Transverse colon (tissue), 4 donors: ENCODE measurements at regions of chr2 and their contacts with region 1.

Region 1: GRCh38 chr2:102251042-102251848 is 60.1 kb upstream of the IL1RL1 start:
- DNase-seq: peak; percentile 73
- H3K4me3 ChIP-seq: peak overlapping the region; percentile 7 to 51 (median 30)
- H3K27ac ChIP-seq: peak overlapping the region in 1 of 4 donors; percentile 0
- H3K4me1 ChIP-seq: peaks cover 0 to 10% (median 5%) of the 10 kb centered on the region in 4 donors
- H3K27me3 ChIP-seq: peaks cover 5% of the 10 kb centered on the region
- CTCF ChIP-seq: peak; percentile 62 to 76 (median 72)
- EP300 ChIP-seq: no peak
- POLR2A ChIP-seq: no peak

Region 2: GRCh38 chr2:102063941-102064678 is 187.1 kb before region 1 on chr2:
- in situ Hi-C with region 1: no loop called
- intact Hi-C with region 1: no loop called
- DNase-seq: peak; percentile 81
- H3K4me3 ChIP-seq: no peak overlapping the region
- H3K27ac ChIP-seq: peak overlapping the region; percentile 88 to 93 (median 91)
- H3K4me1 ChIP-seq: peaks cover 21 to 64% (median 38%) of the 10 kb centered on the region in 4 donors
- H3K27me3 ChIP-seq: no peaks in the 10 kb centered on the region
- CTCF ChIP-seq: no peak
- EP300 ChIP-seq: peak; percentile 98
- POLR2A ChIP-seq: no peak

Region 3: DNA sequence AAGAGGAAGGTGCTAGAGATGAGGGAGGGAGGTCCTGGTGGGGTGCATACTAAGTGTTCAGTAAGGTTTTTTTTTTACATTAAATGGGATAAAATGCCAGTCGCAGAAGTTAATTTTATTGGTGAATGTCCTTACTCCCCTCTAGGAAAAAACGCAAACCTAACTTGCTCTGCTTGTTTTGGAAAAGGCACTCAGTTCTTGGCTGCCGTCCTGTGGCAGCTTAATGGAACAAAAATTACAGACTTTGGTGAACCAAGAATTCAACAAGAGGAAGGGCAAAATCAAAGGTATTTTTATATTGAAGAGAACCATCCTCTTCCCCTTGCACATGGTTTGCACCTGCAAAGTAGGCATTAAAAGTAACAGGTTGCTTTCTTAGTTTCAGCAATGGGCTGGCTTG is 91.6 kb after region 1 on chr2:
- in situ Hi-C with region 1: loop called in 1 of 4 experiments (anchors 10 kb)
- intact Hi-C with region 1: no loop called
- DNase-seq: no peak
- H3K4me3 ChIP-seq: no peak overlapping the region
- H3K27ac ChIP-seq: no peak overlapping the region
- H3K4me1 ChIP-seq: no peaks in the 10 kb centered on the region
- H3K27me3 ChIP-seq: no peaks in the 10 kb centered on the region
- CTCF ChIP-seq: no peak
- EP300 ChIP-seq: no peak
- POLR2A ChIP-seq: no peak

Region 4: GRCh38 chr2:102355526-102356380 is 104.5 kb after region 1 on chr2 and contains the start of gene IL18R1:
- in situ Hi-C with region 1: loop called in 2 of 4 experiments (anchors 10 kb)
- intact Hi-C with region 1: no loop called
- DNase-seq: peak; percentile 84
- H3K4me3 ChIP-seq: peak within 1 kb of the TSS; percentile 40 to 89 (median 72)
- H3K27ac ChIP-seq: peak within 1 kb of the TSS; percentile 64 to 82 (median 74)
- H3K4me1 ChIP-seq: peaks cover 0 to 14% (median 2%) of the 10 kb centered on the region in 4 donors
- H3K27me3 ChIP-seq: no peaks in the 10 kb centered on the region
- CTCF ChIP-seq: peak; percentile 62 to 90 (median 81)
- EP300 ChIP-seq: no peak
- POLR2A ChIP-seq: peak; percentile 28
- total RNA-seq, gene IL18R1: 0.75 to 6.0 (median 2.8) TPM

Region 5: DNA sequence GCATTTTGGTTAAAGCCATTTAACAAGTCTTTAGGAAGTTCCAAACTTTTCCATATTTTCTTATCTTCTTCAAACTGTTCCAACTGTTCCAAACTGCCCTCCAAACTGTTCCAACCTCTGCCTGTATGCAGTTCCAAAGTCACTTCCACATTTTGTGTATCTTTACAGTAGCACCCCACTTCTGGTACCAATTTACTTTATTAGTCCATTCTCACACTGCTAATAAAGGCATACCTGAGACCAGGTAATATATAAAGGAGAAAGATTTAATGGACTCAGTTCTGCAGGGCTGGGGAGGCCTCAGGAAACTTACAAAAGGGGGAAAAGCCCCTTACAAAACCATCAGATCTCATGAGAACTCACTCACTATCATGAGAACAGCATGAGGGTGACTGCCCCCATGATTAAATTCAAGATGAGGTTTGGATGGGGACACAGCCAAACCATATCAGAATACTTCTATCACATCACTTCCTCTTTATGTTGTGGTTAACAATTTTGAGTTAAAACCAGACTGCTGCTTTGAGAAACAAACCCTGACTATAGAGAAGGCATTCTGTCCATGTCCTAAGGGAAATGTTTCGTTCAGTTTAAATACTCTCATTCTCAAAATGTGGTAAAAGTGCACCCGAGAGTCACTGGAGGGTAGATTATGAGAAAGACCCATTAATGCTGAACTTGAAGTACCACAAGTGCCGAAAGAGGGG is 115.3 kb after region 1 on chr2:
- in situ Hi-C with region 1: loop called in 1 of 4 experiments (anchors 10 kb)
- intact Hi-C with region 1: no loop called
- DNase-seq: no peak
- H3K4me3 ChIP-seq: no peak overlapping the region
- H3K27ac ChIP-seq: peak overlapping the region in 2 of 4 donors; percentile 1 to 55
- H3K4me1 ChIP-seq: no peaks in the 10 kb centered on the region
- H3K27me3 ChIP-seq: no peaks in the 10 kb centered on the region
- CTCF ChIP-seq: no peak
- EP300 ChIP-seq: no peak
- POLR2A ChIP-seq: no peak

Region 6: GRCh38 chr2:102442967-102443828 is 192.0 kb after region 1 on chr2:
- in situ Hi-C with region 1: loop called in 2 of 4 experiments (anchors 10 kb)
- intact Hi-C with region 1: no loop called
- DNase-seq: peak; percentile 22
- H3K4me3 ChIP-seq: no peak overlapping the region
- H3K27ac ChIP-seq: peak overlapping the region in 1 of 4 donors; percentile 11
- H3K4me1 ChIP-seq: peaks cover 0 to 9% (median 0%) of the 10 kb centered on the region in 4 donors
- H3K27me3 ChIP-seq: no peaks in the 10 kb centered on the region
- CTCF ChIP-seq: peak; percentile 59 to 75 (median 69)
- EP300 ChIP-seq: no peak
- POLR2A ChIP-seq: no peak